HepG2 (cell line): ENCODE measurements at regions of chr18 and their contacts with region 1.

Region 1: DNA sequence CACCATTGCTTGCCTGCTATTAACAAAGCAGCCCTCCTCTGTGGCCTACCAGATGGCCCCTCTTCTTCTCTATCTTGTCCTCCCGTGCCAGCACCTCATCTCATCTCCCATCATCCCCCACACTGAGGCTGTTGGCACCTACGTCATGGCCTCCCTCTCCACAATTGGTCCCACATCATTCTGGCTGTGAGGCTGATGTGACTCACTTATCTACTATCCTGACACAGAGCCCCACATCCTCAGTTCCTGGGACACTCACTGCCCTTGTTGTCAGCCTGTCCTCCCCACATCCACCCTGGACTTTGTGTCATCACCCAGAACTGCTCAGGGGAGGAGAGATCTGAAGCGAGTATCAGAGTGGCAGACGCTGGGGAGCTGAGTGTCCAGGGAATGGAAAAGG is 102.9 kb downstream of the MRO start:
- DNase-seq: no peak
- ATAC-seq: 0 out of 3 replicates have a peak, but pooled peaks have one; percentile 32
- H3K4me3 ChIP-seq: no peak overlapping the region
- H3K27ac ChIP-seq: no peak overlapping the region
- H3K4me1 ChIP-seq: no peaks in the 10 kb centered on the region
- H3K27me3 ChIP-seq: no peaks in the 10 kb centered on the region; a peak in 2 of 5 replicates
- CTCF ChIP-seq: no peak
- EP300 ChIP-seq: no peak
- POLR2A ChIP-seq: no peak
- RAD21 ChIP-seq: no peak

Region 2: GRCh38 chr18:50737127-50737526 is 20.2 kb after region 1 on chr18:
- CTCF ChIA-PET with region 1: no interaction called
- POLR2A ChIA-PET with region 1: no interaction called
- in situ Hi-C with region 1: no loop called
- intact Hi-C with region 1: loop called (anchors 1 kb)
- DNase-seq: peak; percentile 63
- ATAC-seq: peak; percentile 96
- H3K4me3 ChIP-seq: peak overlapping the region in 1 of 3 experiments; percentile 13; a peak in 1 of 6 replicates
- H3K27ac ChIP-seq: no peak overlapping the region
- H3K4me1 ChIP-seq: peaks cover 29% of the 10 kb centered on the region
- H3K27me3 ChIP-seq: no peaks in the 10 kb centered on the region
- CTCF ChIP-seq: peak; percentile 11; the same call in 1 of the 2 replicates
- EP300 ChIP-seq: peak in 1 of 2 experiments; percentile 76; a peak in 2 of 4 replicates
- POLR2A ChIP-seq: no peak
- RAD21 ChIP-seq: no peak

Region 3: DNA sequence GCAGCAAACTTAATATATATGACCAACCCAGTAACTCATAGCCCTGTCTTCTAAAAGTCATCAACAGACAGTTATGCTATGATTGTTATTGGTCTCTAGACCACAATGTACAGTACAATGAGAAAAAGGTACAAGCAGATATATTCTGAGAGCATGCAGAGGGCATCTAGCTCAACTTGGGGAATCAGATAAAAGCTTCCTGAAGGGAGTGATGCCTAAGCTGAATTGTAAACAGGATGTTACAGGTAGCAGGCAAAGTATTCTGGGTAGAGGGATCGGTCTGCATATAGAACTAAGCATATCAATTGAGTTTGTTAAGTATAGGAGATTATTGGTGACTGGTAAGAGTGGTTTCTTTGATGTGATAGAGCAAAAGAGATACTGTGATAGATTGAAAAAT is 192.4 kb after region 1 on chr18:
- CTCF ChIA-PET with region 1: no interaction called
- POLR2A ChIA-PET with region 1: no interaction called
- in situ Hi-C with region 1: no loop called
- intact Hi-C with region 1: no loop called
- DNase-seq: no peak
- ATAC-seq: no peak
- H3K4me3 ChIP-seq: no peak overlapping the region
- H3K27ac ChIP-seq: no peak overlapping the region
- H3K4me1 ChIP-seq: no peaks in the 10 kb centered on the region
- H3K27me3 ChIP-seq: no peaks in the 10 kb centered on the region
- CTCF ChIP-seq: no peak
- EP300 ChIP-seq: no peak
- POLR2A ChIP-seq: no peak
- RAD21 ChIP-seq: no peak